ENCODE measurements at regions of chr1 and their contacts with region 1.

Region 1: GRCh38 chr1:32992489-32993323 is 28.1 kb upstream of the RNF19B start:
- DNase-seq: peak; percentile 100
- H3K4me3 ChIP-seq: no peak overlapping the region
- H3K27ac ChIP-seq: peak overlapping the region; percentile 95
- H3K4me1 ChIP-seq: peaks cover 60% of the 10 kb centered on the region
- H3K27me3 ChIP-seq: no peaks in the 10 kb centered on the region
- CTCF ChIP-seq: no peak

Region 2: DNA sequence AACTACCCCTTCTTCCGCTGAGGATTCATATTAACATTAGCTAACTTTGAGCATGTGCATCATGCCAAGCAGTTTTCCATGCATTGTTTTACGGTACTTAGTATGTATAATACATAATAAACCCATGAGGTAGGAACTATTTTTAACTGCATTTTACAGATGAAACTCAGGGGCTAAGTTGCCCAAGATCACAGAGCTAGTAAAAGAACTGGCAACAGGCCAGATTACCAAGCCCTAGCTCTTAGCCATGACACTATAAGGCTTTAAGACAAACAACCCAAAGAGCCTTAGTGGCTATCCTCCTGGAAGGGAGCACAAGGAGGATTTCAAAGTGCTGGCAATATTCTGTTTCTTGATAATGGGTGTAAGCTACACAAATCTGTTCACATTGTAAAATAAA is 37.9 kb after region 1 on chr1:
- CTCF ChIA-PET with region 1: no interaction called
- dilution Hi-C with region 1: no loop called
- in situ Hi-C with region 1: no loop called
- intact Hi-C with region 1: no loop called
- DNase-seq: no peak
- H3K4me3 ChIP-seq: no peak overlapping the region
- H3K27ac ChIP-seq: no peak overlapping the region
- H3K4me1 ChIP-seq: peaks cover 10% of the 10 kb centered on the region
- H3K27me3 ChIP-seq: no peaks in the 10 kb centered on the region
- CTCF ChIP-seq: no peak

Region 3: DNA sequence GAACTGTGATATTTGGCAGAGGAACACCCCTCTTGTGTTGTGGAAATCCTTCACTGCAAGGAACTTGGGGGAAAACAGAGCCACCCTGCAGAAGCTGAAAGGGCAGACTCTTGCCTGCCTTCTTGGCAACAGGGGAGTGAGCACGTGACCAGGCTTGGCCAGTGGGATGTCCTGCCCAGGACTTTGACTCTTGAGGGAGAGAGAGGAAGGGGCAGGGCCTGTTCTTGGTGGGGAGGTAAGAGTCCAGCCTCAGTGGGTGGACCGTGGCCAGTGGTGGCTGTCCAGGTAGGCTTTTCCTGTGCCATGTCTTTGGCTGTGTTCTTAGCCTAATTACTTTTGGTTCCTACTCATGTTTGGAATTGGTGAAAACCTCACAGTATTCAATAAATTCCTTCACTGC is 52.5 kb after region 1 on chr1:
- CTCF ChIA-PET with region 1: no interaction called
- dilution Hi-C with region 1: loop called (anchors 5 kb)
- in situ Hi-C with region 1: no loop called
- intact Hi-C with region 1: no loop called
- DNase-seq: no peak
- H3K4me3 ChIP-seq: no peak overlapping the region
- H3K27ac ChIP-seq: no peak overlapping the region
- H3K4me1 ChIP-seq: peaks cover 25% of the 10 kb centered on the region
- H3K27me3 ChIP-seq: no peaks in the 10 kb centered on the region
- CTCF ChIP-seq: no peak

Region 4: DNA sequence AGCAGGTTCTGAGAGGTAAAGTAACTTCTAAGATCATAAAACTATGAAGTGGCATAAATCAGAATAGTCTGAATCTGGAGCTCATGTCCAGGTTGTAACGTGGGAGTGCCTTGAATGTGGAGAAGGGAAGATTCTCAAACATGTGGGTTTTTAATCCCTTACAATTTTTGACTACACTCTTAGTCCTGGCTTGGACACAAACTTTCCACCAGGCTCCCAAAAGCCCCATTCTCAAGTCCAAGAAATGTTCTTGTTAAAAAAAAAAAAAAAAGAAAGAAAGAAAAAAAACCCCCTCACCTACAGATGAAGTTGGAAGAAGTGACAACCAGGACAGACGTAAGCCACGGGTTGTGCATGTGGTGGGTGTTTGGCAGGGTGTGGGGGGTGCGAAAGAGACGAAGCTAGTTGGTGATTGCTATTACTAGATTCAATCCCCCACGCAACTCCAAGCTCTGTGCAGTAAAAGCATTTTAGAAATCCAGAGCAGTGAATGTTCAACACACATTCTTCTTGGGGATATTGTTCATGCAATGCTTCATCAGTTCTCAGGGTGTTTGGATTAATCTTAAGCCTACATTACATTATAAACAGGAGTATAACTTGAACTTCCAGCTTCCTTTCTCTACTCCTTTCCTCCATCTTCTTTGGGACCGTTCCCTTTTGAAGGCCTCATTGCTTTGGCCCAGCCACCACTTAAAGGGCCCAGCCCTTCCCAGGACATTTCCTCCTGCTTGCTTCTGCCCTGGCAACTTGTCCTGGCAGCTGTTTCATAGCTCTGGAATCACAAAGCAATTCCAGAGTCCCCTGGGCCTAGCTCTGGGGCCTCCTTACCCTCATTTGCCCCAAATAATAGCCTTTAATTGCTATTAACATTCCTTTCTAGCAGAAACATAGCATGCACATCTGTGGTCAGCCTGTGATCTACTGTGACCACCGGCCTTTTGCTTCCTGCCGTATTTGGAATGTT is 396.4 kb after region 1 on chr1:
- CTCF ChIA-PET with region 1: no interaction called
- dilution Hi-C with region 1: no loop called
- in situ Hi-C with region 1: no loop called
- intact Hi-C with region 1: no loop called
- DNase-seq: no peak
- H3K4me3 ChIP-seq: no peak overlapping the region
- H3K27ac ChIP-seq: no peak overlapping the region
- H3K4me1 ChIP-seq: peaks cover 18% of the 10 kb centered on the region
- H3K27me3 ChIP-seq: no peaks in the 10 kb centered on the region
- CTCF ChIP-seq: no peak

Measured in mammary epithelial cell (primary cell).